H1 (cell line): ENCODE measurements at regions of chr5 and their contacts with region 1.

Region 1: DNA sequence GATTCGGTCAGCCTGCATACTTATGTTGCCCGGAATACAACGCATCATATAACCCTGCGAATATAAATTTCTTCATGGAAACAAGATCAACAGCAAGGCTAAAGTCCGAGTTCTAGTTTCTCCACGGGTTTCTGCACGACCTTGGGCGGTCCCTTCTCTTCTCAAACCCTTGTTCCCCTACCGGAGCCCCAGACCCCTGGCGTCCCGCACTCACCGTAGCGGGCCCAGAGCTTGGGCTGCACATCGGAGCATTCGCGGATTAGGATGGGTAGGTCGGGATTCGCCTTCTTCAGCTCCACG is 438 bp downstream of the NDUFA2 start:
- DNase-seq: no peak
- H3K4me3 ChIP-seq: peak overlapping the region; percentile 63 to 86 (median 78)
- H3K27ac ChIP-seq: peak overlapping the region; percentile 26; the same call in 1 of the 2 replicates
- H3K4me1 ChIP-seq: peaks cover 0 to 4% (median 0%) of the 10 kb centered on the region in 4 experiments; a peak in 2 of 7 replicates
- H3K27me3 ChIP-seq: no peaks in the 10 kb centered on the region
- CTCF ChIP-seq: no peak
- EP300 ChIP-seq: no peak
- POLR2A ChIP-seq: no peak
- RAD21 ChIP-seq: no peak

Region 2: GRCh38 chr5:140547508-140548299 is 99.3 kb before region 1 on chr5 and contains the start of gene EIF4EBP3:
- CTCF ChIA-PET with region 1: interaction called, 9 read pairs
- POLR2A ChIA-PET with region 1: interaction called, 78 read pairs
- DNase-seq: peak; percentile 91 to 95
- H3K4me3 ChIP-seq: peak within 1 kb of the TSS; percentile 34 to 66 (median 44)
- H3K27ac ChIP-seq: peak within 1 kb of the TSS; percentile 73
- H3K4me1 ChIP-seq: peaks cover 0 to 18% (median 6%) of the 10 kb centered on the region in 4 experiments; a peak in 4 of 7 replicates
- H3K27me3 ChIP-seq: no peaks in the 10 kb centered on the region
- CTCF ChIP-seq: peak; percentile 40 to 73 (median 61)
- EP300 ChIP-seq: no peak
- POLR2A ChIP-seq: peak; percentile 72 to 83
- RAD21 ChIP-seq: peak; percentile 35 to 43
- total RNA-seq, gene EIF4EBP3: 8.9 and 11.7 TPM in 2 replicates

Region 3: DNA sequence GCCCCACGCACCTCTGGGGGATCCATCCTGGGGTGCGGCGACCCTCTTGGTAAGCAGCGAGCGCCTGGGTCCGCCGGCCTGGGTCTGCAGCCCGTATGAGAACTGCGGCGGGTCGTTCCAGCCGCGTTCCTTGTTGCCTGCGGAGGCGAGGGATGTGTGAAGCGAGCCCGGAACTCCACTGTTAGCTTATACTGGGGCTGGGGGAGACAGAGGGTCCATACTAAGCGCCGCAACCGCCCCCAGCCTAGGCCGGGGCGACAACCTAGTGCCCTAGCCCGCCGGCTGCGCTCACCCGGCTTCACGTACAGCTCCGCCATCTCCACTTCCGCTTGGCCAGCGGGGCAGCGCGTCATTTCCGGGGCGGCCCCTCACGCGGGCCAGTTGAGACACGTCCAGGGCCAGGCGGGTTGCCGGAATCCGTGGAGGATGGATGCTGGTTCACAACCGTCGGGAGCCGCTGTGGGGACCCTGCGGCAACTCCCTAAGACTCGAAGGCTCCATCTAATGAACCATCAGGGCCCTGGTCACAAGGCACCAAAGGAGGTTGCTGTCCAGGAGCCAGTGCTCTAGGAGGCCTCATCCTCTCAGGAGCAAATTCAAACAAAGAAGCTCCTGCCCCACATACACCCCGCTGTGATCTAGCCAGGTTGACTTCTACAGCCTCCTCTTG is 89.7 kb before region 1 on chr5 and contains the start of gene SRA1:
- CTCF ChIA-PET with region 1: no interaction called
- POLR2A ChIA-PET with region 1: interaction called, 19 read pairs
- DNase-seq: peak; percentile 61 to 95
- H3K4me3 ChIP-seq: peak within 1 kb of the TSS; percentile 61 to 93 (median 64)
- H3K27ac ChIP-seq: peak within 1 kb of the TSS; percentile 85
- H3K4me1 ChIP-seq: peaks cover 0 to 6% (median 5%) of the 10 kb centered on the region in 4 experiments; a peak in 4 of 7 replicates
- H3K27me3 ChIP-seq: no peaks in the 10 kb centered on the region
- CTCF ChIP-seq: no peak
- EP300 ChIP-seq: no peak
- POLR2A ChIP-seq: peak; percentile 97 to 98
- RAD21 ChIP-seq: no peak; a peak in 1 of 4 replicates
- total RNA-seq, gene SRA1: 34.3 and 39.4 TPM in 2 replicates

Region 4: DNA sequence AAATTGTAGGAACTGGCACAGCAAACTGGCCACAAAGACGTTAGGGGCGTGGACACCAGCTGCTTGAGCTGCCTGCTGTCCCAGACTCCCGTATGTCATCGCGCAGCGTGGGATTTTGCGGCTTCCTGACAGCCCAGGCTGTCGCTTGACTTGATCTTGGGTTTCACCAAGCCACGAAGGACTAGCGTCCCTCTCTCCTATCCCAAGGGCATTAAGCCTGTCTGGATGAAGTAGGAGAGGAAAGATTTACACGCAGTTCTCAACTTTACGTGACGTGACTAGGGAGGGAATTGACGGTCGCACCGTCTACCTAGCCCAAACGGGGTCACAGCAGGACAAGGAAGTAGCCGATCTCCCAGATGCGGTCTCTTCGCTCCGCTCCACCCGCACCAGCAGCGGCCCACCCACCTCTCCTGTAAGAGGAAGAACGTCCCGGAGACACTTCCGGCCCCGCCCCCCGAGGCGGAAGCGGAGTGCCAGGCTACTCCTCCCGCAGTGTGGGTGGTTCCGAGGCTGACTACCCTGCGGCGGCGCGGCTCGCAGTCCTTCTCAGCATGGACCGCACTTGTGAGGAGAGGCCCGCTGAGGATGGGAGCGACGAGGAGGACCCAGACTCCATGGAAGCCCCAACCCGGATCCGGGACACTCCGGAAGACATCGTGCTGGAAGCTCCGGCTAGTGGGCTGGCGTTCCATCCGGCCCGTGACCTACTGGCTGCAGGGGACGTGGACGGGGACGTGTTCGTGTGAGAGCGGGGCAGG is 17.5 kb after region 1 on chr5 and contains the start of gene WDR55:
- CTCF ChIA-PET with region 1: interaction called, 4 read pairs
- POLR2A ChIA-PET with region 1: interaction called, 87 read pairs
- DNase-seq: peak; percentile 79 to 94
- H3K4me3 ChIP-seq: peak within 1 kb of the TSS; percentile 82 to 98 (median 94)
- H3K27ac ChIP-seq: no peak within 1 kb of the TSS
- H3K4me1 ChIP-seq: no peaks in the 10 kb centered on the region; a peak in 1 of 7 replicates
- H3K27me3 ChIP-seq: no peaks in the 10 kb centered on the region
- CTCF ChIP-seq: no peak
- EP300 ChIP-seq: 0 out of 3 replicates have a peak, but pooled peaks of 1 of the 2 experiments have one; percentile 11
- POLR2A ChIP-seq: peak in 1 of 2 experiments; percentile 71; a peak in 2 of 3 replicates
- RAD21 ChIP-seq: no peak
- total RNA-seq, gene WDR55: 22.7 and 22.8 TPM in 2 replicates

Region 5: DNA sequence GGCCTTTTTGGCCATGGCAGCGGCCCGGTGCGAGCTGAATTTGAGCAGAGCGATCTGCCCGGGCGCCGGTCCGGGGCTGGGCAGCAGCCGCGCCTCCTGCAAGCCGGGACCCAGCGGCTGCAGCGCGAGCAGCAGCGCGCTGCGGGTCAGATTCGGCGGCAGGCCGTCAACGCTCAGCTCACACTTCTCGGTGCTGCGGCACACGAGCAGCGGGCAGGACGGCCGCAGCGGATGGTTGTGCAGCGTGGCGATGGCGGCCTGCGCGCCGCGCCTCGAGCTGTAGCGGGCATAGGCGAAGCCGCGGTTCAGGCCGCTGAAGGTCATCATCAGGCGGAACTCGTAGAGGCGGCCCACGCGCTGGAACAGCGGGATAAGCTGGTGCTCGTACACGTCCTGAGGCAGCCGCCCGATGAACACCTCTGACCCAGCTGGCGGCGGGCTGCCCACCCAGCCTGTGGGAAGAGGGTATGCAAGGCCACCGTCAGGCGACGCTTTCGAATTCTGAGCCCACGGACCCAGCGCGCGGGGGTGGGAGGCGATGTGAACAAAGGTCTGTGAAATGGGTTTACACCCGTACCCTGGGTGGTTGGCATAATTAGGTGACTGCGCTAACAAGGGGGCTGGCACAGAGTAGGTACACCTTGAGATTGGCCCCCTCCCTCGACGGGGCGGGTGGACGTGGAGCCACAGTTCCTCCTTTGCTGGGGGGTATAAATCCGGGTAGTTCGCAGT is 25.6 kb after region 1 on chr5:
- CTCF ChIA-PET with region 1: no interaction called
- POLR2A ChIA-PET with region 1: interaction called, 26 read pairs
- DNase-seq: peak in 1 of 2 experiments; percentile 52
- H3K4me3 ChIP-seq: no peak overlapping the region
- H3K27ac ChIP-seq: no peak overlapping the region
- H3K4me1 ChIP-seq: no peaks in the 10 kb centered on the region; a peak in 1 of 7 replicates
- H3K27me3 ChIP-seq: no peaks in the 10 kb centered on the region
- CTCF ChIP-seq: no peak
- EP300 ChIP-seq: no peak
- POLR2A ChIP-seq: no peak
- RAD21 ChIP-seq: no peak

Region 6: GRCh38 chr5:140690941-140691924 is 44.2 kb after region 1 on chr5 and contains the starts of genes HARS1 and HARS2:
- CTCF ChIA-PET with region 1: interaction called, 5 read pairs
- POLR2A ChIA-PET with region 1: interaction called, 22 read pairs
- DNase-seq: peak; percentile 88 to 91
- H3K4me3 ChIP-seq: peak within 1 kb of the TSS; percentile 76 to 98 (median 88)
- H3K27ac ChIP-seq: 0 out of 2 replicates have a peak within 1 kb of the TSS, but pooled peaks have one; percentile 43
- H3K4me1 ChIP-seq: no peaks in the 10 kb centered on the region; a peak in 1 of 7 replicates
- H3K27me3 ChIP-seq: no peaks in the 10 kb centered on the region
- CTCF ChIP-seq: no peak
- EP300 ChIP-seq: no peak
- POLR2A ChIP-seq: peak; percentile 71 to 77
- RAD21 ChIP-seq: no peak
- total RNA-seq, gene HARS1: 55.6 and 56.8 TPM in 2 replicates
- total RNA-seq, gene HARS2: 21.4 and 23.1 TPM in 2 replicates

Region 7: GRCh38 chr5:140710899-140711552 is 64.0 kb after region 1 on chr5:
- CTCF ChIA-PET with region 1: no interaction called
- POLR2A ChIA-PET with region 1: interaction called, 13 read pairs
- DNase-seq: peak; percentile 74 to 85
- H3K4me3 ChIP-seq: peak overlapping the region; percentile 63 to 78 (median 70)
- H3K27ac ChIP-seq: no peak overlapping the region
- H3K4me1 ChIP-seq: no peaks in the 10 kb centered on the region
- H3K27me3 ChIP-seq: no peaks in the 10 kb centered on the region
- CTCF ChIP-seq: no peak
- EP300 ChIP-seq: no peak
- POLR2A ChIP-seq: peak in 1 of 2 experiments; percentile 64; a peak in 2 of 3 replicates
- RAD21 ChIP-seq: no peak

Region 8: DNA sequence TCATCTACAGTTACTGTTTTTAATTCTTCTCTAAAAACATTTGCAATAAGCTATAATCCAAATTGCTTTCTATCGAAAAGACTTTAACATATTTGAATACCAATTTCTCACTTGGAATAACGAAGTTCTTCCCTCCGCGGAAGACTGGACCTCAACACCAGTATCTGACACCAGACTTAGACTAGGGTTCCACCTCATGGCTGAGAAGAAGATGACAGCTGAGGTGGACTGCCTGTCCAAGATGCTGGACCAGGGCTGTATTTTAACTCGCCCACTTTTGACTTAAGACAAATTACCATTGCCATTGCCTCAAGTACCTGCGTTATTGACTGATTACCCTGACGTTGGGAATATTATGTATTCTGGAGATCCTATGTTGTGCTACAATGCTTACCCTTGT is 87.4 kb after region 1 on chr5:
- CTCF ChIA-PET with region 1: no interaction called
- POLR2A ChIA-PET with region 1: no interaction called
- DNase-seq: no peak
- H3K4me3 ChIP-seq: no peak overlapping the region
- H3K27ac ChIP-seq: no peak overlapping the region
- H3K4me1 ChIP-seq: no peaks in the 10 kb centered on the region
- H3K27me3 ChIP-seq: no peaks in the 10 kb centered on the region
- CTCF ChIP-seq: no peak
- EP300 ChIP-seq: no peak
- POLR2A ChIP-seq: no peak
- RAD21 ChIP-seq: 0 out of 4 replicates have a peak, but pooled peaks of 1 of the 2 experiments have one; percentile 3

Region 9: GRCh38 chr5:140795259-140795641 is 148.3 kb after region 1 on chr5:
- CTCF ChIA-PET with region 1: no interaction called
- POLR2A ChIA-PET with region 1: no interaction called
- DNase-seq: no peak
- H3K4me3 ChIP-seq: peak overlapping the region; percentile 51 to 86 (median 58)
- H3K27ac ChIP-seq: no peak overlapping the region
- H3K4me1 ChIP-seq: no peaks in the 10 kb centered on the region
- H3K27me3 ChIP-seq: no peaks in the 10 kb centered on the region
- CTCF ChIP-seq: peak in 2 of 3 experiments; percentile 54 to 59; a peak in 2 of 4 replicates
- EP300 ChIP-seq: no peak
- POLR2A ChIP-seq: no peak
- RAD21 ChIP-seq: no peak; a peak in 1 of 4 replicates